ENCODE measurements at regions of chr6 and their contacts with region 1.

Region 1: DNA sequence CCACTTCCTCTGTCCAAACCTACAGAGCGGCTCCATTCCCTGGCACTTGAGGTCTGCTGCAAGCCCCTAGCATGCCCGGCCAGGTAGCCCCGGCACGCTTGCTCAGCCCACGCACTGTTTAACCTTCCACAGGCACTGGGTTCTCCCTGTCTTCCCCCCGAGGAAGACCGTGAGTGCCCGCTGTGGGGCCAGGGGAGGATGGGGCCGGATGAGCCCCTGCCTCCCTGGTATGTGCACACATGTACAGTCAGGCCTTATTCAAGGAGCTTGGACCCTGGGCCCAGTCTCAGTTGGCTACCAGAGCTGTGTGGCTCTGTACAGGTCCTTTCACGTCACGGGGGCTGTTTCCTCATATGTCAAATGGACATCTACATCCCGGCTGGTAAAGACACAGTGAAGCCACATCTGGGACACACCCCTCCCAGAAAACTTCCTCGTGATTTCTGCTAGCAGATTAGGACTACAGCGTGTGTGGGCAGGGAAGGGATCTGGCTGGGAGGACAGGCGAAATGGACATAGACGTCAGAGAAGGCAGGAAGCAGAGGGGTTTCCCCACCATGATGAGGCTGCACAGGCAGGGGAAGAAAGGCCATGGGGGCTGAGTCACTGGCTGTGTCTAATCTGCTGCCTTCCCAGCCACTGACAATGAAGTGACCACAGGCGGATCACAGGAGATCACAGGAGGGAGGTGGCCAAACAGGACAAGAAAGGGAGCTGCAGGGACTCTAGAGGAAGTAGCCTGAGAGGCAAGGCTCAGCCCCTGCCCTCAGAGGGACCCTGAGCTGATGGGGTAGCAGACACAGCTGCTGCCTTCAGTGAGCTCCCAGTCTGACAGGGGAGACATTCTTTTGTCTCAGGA is 62.9 kb downstream of the MRPL14 start:
- H3K4me3 ChIP-seq: no peak overlapping the region
- H3K27ac ChIP-seq: no peak overlapping the region
- H3K4me1 ChIP-seq: no peaks in the 10 kb centered on the region
- CTCF ChIP-seq: no peak

Region 2: GRCh38 chr6:44010411-44011349 is 53.6 kb before region 1 on chr6:
- CTCF ChIA-PET with region 1: interaction called, 11 read pairs
- POLR2A ChIA-PET with region 1: no interaction called
- H3K4me3 ChIP-seq: no peak overlapping the region
- H3K27ac ChIP-seq: no peak overlapping the region
- H3K4me1 ChIP-seq: no peaks in the 10 kb centered on the region
- CTCF ChIP-seq: no peak

Region 3: DNA sequence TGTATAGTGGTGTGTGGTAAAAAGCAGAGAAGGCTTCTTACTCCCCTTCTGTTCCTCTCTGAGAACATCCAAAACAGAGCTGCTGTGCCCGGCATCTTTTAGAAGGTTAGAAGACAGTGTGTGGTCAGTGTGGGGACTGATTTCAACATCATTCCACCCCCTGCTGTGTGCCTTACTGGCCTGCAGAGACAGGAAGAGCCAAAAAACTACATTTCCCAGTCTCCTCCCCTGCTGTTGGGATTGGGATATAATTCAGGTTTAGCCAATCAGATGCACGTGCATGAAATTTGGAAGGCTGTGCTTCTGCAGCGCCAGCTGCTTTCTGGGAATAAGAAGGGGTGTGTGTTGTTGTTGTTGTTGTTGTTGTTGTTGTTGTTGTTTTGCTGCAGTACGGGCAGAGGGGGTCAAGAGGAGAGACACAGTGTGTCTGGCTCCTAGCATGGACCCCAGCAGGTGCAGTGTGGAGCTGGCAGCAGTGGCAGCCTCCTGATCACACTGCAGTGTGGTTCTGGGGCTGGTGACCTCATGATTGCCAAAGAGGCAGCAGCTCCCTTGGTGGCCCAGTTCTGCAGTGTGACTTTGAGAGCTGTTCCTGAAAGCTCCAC is 11.8 kb before region 1 on chr6:
- CTCF ChIA-PET with region 1: interaction called, 22 read pairs
- POLR2A ChIA-PET with region 1: no interaction called
- H3K4me3 ChIP-seq: no peak overlapping the region
- H3K27ac ChIP-seq: no peak overlapping the region
- H3K4me1 ChIP-seq: no peaks in the 10 kb centered on the region
- CTCF ChIP-seq: no peak

Region 4: GRCh38 chr6:44304282-44305199 is 240.2 kb after region 1 on chr6:
- CTCF ChIA-PET with region 1: no interaction called
- POLR2A ChIA-PET with region 1: no interaction called
- H3K4me3 ChIP-seq: no peak overlapping the region
- H3K27ac ChIP-seq: no peak overlapping the region
- H3K4me1 ChIP-seq: no peaks in the 10 kb centered on the region
- CTCF ChIP-seq: peak; percentile 73

Measured in HEK293 (cell line).